ENCODE measurements at regions of chr1 and their contacts with region 1.

Region 1: DNA sequence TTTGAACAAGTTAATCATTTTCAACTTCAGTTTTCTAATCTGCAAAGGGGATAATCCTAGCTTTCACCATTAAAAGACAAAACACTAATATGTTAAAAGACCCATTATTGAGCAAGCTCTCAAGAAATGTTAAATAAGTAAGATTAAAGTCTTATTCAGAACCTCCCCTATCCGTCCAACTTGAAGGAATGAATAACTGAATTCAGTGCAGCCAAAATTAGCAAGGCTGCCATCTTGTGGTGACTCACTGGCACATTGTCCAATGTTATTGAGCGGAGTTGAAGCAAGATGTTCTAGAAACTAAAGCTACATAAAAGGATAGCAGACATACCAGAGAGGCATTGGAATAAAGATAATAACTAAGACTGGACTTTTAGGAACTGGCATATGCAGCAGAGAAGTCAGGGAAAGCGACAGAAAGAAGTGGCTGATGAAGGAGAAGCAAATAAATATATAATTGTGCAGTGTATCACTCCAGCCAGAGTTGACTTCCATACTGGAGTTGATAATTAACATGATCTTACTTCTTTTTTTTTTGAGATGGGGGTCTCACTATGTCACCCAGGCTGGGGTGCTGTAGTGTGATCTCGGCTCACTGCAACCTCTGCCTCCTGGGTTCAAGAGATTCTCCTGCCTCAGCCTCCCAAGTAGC is 8.2 kb upstream of the CAP1 start:
- DNase-seq: no peak
- ATAC-seq: peak; percentile 95
- H3K4me3 ChIP-seq: no peak overlapping the region
- H3K27ac ChIP-seq: no peak overlapping the region
- H3K4me1 ChIP-seq: peaks cover 9% of the 10 kb centered on the region
- H3K27me3 ChIP-seq: no peaks in the 10 kb centered on the region
- CTCF ChIP-seq: peak; percentile 73 to 86 (median 85)
- EP300 ChIP-seq: no peak
- POLR2A ChIP-seq: no peak
- RAD21 ChIP-seq: peak; percentile 92

Region 2: GRCh38 chr1:39825432-39825951 is 206.9 kb before region 1 on chr1:
- CTCF ChIA-PET with region 1: interaction called, 8 read pairs
- POLR2A ChIA-PET with region 1: no interaction called
- RAD21 ChIA-PET with region 1: interaction called, 4 read pairs
- SMC1A ChIA-PET with region 1: interaction called, 4 read pairs
- in situ Hi-C with region 1: loop called (anchors 5 kb)
- intact Hi-C with region 1: no loop called
- DNase-seq: peak; percentile 69
- ATAC-seq: peak; percentile 94
- H3K4me3 ChIP-seq: no peak overlapping the region
- H3K27ac ChIP-seq: peak overlapping the region; percentile 34
- H3K4me1 ChIP-seq: peaks cover 19% of the 10 kb centered on the region
- H3K27me3 ChIP-seq: no peaks in the 10 kb centered on the region
- CTCF ChIP-seq: no peak
- EP300 ChIP-seq: no peak
- POLR2A ChIP-seq: no peak
- RAD21 ChIP-seq: no peak

Region 3: DNA sequence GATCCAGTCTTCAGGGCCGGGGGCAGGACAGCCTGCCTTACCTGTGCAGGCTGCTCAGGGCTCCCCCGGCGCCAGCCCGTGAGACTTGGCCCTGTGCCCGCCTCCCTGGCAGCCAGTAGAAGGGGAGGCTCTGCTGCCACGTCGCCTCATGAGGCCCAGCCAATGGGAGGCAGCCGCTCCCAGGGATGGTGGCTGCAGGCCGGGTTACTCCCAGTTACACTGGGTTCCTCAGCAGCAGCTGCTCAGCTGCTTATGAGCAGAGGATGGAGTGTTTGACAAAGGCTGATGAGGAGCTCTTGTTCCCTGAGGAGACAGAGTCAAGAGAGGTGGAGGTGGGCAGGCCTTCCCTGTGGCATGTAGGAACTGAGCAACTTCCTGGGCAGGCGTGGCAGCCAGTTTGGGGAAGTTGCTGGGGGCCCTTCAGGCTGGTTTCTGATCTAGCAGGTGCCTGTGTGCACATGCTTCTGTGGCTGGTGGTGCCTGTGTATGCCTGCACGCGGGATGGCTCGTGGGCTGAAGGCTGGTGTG is 71.9 kb before region 1 on chr1:
- CTCF ChIA-PET with region 1: interaction called, 34 read pairs
- POLR2A ChIA-PET with region 1: interaction called, 4 read pairs
- RAD21 ChIA-PET with region 1: interaction called, 39 read pairs
- SMC1A ChIA-PET with region 1: interaction called, 64 read pairs
- in situ Hi-C with region 1: no loop called
- intact Hi-C with region 1: no loop called
- DNase-seq: peak; percentile 58
- ATAC-seq: peak; percentile 80
- H3K4me3 ChIP-seq: peak overlapping the region; percentile 14; the same call in 1 of the 2 replicates
- H3K27ac ChIP-seq: peak overlapping the region; percentile 68
- H3K4me1 ChIP-seq: peaks cover 22% of the 10 kb centered on the region
- H3K27me3 ChIP-seq: no peaks in the 10 kb centered on the region
- CTCF ChIP-seq: no peak
- EP300 ChIP-seq: no peak
- POLR2A ChIP-seq: peak; percentile 71
- RAD21 ChIP-seq: no peak

Region 4: GRCh38 chr1:39995973-39996393 is 36.4 kb before region 1 on chr1:
- CTCF ChIA-PET with region 1: interaction called, 21 read pairs
- POLR2A ChIA-PET with region 1: no interaction called
- RAD21 ChIA-PET with region 1: interaction called, 11 read pairs
- SMC1A ChIA-PET with region 1: interaction called, 28 read pairs
- in situ Hi-C with region 1: no loop called
- intact Hi-C with region 1: no loop called
- DNase-seq: peak; percentile 52
- ATAC-seq: peak; percentile 99
- H3K4me3 ChIP-seq: no peak overlapping the region
- H3K27ac ChIP-seq: peak overlapping the region; percentile 64
- H3K4me1 ChIP-seq: peaks cover 25% of the 10 kb centered on the region
- H3K27me3 ChIP-seq: no peaks in the 10 kb centered on the region
- CTCF ChIP-seq: 0 out of 6 replicates have a peak, but pooled peaks of 1 of the 3 experiments have one; percentile 11
- EP300 ChIP-seq: 0 out of 4 replicates have a peak, but pooled peaks of 1 of the 2 experiments have one; percentile 62
- POLR2A ChIP-seq: no peak
- RAD21 ChIP-seq: no peak

Region 5: DNA sequence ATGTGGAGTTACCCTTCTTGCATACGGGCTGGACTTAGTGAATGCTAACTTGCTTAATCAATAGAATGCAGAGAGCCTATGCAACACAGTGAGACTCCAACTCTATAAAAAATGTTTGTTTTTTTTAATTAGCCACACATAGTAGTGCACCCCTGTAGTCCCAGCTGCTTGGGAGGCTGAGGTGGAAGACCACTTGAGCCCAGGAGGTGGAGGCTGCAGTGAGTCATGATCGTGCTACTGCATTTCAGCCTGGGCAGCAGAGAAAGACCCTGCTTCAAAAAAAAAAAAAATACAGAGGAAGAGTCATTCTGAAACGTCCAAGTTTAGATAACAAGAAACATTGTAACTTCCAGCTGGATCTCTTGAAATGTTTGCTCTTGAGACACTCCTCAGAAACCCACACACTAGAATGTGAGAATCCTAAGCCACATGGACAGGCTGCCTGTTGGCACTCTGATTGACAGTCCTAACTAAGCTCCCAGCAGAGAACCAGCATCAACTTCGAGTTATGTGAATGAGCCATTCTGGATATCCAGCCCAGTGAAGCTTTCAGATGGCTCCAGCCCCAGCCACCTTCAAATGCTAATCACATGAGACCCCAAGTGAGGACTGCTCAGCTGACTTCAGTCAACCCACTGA is 11.8 kb before region 1 on chr1:
- CTCF ChIA-PET with region 1: interaction called, 36 read pairs
- POLR2A ChIA-PET with region 1: interaction called, 3 read pairs
- RAD21 ChIA-PET with region 1: interaction called, 9 read pairs
- SMC1A ChIA-PET with region 1: interaction called, 8 read pairs
- in situ Hi-C with region 1: no loop called
- intact Hi-C with region 1: no loop called
- DNase-seq: no peak
- ATAC-seq: peak; percentile 31; the same call in 2 of the 3 replicates
- H3K4me3 ChIP-seq: no peak overlapping the region
- H3K27ac ChIP-seq: no peak overlapping the region
- H3K4me1 ChIP-seq: peaks cover 8% of the 10 kb centered on the region
- H3K27me3 ChIP-seq: no peaks in the 10 kb centered on the region
- CTCF ChIP-seq: no peak
- EP300 ChIP-seq: no peak
- POLR2A ChIP-seq: no peak
- RAD21 ChIP-seq: no peak